PC-9 (cell line): ENCODE measurements at regions of chr6 and their contacts with region 1.

Region 1: GRCh38 chr6:103122766-103123601 is 1729.5 kb downstream of the GRIK2 start:
- DNase-seq: peak; percentile 40 to 45
- H3K4me3 ChIP-seq: no peak overlapping the region
- H3K27ac ChIP-seq: no peak overlapping the region
- H3K4me1 ChIP-seq: no peaks in the 10 kb centered on the region
- H3K27me3 ChIP-seq: no peaks in the 10 kb centered on the region
- CTCF ChIP-seq: peak; percentile 71

Region 2: GRCh38 chr6:102853269-102853955 is 269.6 kb before region 1 on chr6:
- CTCF ChIA-PET with region 1: no interaction called
- POLR2A ChIA-PET with region 1: no interaction called
- intact Hi-C with region 1: loop called (anchors 2 kb)
- DNase-seq: no peak
- H3K4me3 ChIP-seq: no peak overlapping the region
- H3K27ac ChIP-seq: no peak overlapping the region
- H3K4me1 ChIP-seq: no peaks in the 10 kb centered on the region; the same call in 1 of the 2 replicates
- H3K27me3 ChIP-seq: no peaks in the 10 kb centered on the region
- CTCF ChIP-seq: no peak

Region 3: DNA sequence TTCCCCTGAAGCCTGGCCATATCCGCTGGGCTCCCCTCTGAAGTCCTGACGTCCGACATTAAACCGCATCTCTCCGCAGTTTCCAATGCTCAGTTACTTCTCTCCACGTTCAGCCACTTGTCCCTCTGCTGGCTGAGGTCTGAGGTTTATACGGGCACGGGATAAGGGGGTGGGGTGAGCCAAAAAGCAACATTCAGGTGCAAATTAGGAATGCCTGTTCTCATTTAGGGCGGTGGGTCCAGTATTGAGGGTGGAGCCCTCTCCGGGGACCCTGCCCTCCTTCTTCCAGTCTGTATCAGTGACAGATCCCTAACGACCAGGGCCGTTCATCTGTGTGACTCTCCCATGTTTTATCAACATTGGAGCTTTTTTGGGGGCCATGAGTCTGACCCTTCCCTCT is 282.3 kb after region 1 on chr6:
- CTCF ChIA-PET with region 1: no interaction called
- POLR2A ChIA-PET with region 1: no interaction called
- intact Hi-C with region 1: no loop called
- DNase-seq: no peak
- H3K4me3 ChIP-seq: no peak overlapping the region
- H3K27ac ChIP-seq: no peak overlapping the region
- H3K4me1 ChIP-seq: no peaks in the 10 kb centered on the region
- H3K27me3 ChIP-seq: no peaks in the 10 kb centered on the region
- CTCF ChIP-seq: no peak

Region 4: GRCh38 chr6:104042925-104043324 is 919.9 kb after region 1 on chr6:
- CTCF ChIA-PET with region 1: no interaction called
- POLR2A ChIA-PET with region 1: no interaction called
- intact Hi-C with region 1: no loop called
- DNase-seq: no peak
- H3K4me3 ChIP-seq: no peak overlapping the region
- H3K27ac ChIP-seq: no peak overlapping the region
- H3K4me1 ChIP-seq: no peaks in the 10 kb centered on the region
- H3K27me3 ChIP-seq: no peaks in the 10 kb centered on the region
- CTCF ChIP-seq: no peak

Region 5: DNA sequence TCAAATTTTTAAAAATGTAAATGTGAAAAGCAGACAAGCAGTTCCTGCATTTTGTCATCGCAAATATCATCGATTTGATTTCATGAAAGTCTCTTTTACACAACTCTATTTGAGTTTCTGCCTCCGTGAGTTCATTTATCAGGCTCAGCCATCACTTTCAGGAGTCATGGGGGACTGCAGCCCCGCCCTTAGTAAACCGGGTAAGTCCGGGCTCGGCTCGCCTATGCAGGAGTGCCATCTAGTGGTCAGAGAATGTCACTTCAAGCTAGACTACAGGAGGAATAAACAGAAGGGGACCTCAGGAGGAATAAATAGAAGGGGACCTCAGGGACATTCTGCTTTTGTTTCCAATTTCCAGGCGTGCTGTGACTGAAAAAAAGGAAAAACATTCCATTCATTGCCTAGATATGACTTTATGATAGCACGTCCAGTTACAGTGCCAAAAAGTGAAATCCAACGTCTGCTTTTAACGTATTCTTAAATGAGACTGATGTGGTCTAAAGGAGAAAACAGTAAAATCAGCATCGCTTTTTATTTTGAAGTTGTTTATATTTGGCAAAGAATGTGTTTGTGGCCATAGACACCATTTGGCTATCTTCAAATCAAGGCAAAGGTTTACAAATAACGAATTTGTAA is 1402.8 kb after region 1 on chr6:
- CTCF ChIA-PET with region 1: no interaction called
- POLR2A ChIA-PET with region 1: no interaction called
- intact Hi-C with region 1: loop called (anchors 10 kb)
- DNase-seq: peak; percentile 58 to 62
- H3K4me3 ChIP-seq: no peak overlapping the region
- H3K27ac ChIP-seq: no peak overlapping the region
- H3K4me1 ChIP-seq: no peaks in the 10 kb centered on the region
- H3K27me3 ChIP-seq: no peaks in the 10 kb centered on the region
- CTCF ChIP-seq: peak; percentile 99